B cell (primary cell): ENCODE measurements at regions of chr5 and their contacts with region 1.

Region 1: DNA sequence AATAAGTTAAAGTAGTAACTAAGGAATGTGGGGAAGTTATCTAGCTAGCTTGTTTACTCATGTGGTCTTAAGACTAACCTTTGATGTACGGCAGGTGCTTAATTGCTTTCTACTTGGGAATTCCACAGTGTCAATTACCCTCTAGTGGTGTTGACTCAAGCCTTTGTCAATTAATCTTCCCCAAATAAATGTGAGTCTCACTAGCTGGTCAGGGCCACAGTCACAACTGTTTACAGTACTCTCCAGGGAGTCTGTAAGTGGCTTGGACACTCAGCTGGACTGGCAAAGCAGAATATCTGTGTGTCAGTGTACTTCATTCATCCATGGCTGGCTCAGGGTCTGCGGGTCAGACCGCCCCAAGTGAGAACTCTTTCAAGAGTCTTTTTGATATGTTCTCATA is 30.8 kb downstream of the SMIM3 start:
- DNase-seq: no peak
- ATAC-seq: no peak
- H3K4me3 ChIP-seq: no peak overlapping the region
- H3K4me3 Mint-ChIP-seq: no peak overlapping the region
- H3K27ac ChIP-seq: no peak overlapping the region
- H3K27ac Mint-ChIP-seq: no peak overlapping the region
- H3K4me1 ChIP-seq: no peaks in the 10 kb centered on the region
- H3K4me1 Mint-ChIP-seq: no peaks in the 10 kb centered on the region
- H3K27me3 ChIP-seq: peaks cover 0 to 2% (median under 1%) of the 10 kb centered on the region in 4 experiments
- H3K27me3 Mint-ChIP-seq: peaks cover 21% of the 10 kb centered on the region
- CTCF ChIP-seq: no peak

Region 2: GRCh38 chr5:151239237-151239861 is 430.0 kb after region 1 on chr5:
- CTCF ChIA-PET with region 1: no interaction called
- POLR2A ChIA-PET with region 1: no interaction called
- intact Hi-C with region 1: no loop called
- DNase-seq: peak; percentile 66
- ATAC-seq: peak; percentile 64
- H3K4me3 ChIP-seq: peak overlapping the region in 2 of 5 experiments; percentile 7 to 20
- H3K4me3 Mint-ChIP-seq: peak overlapping the region; percentile 84
- H3K27ac ChIP-seq: no peak overlapping the region
- H3K27ac Mint-ChIP-seq: peak overlapping the region; percentile 82
- H3K4me1 ChIP-seq: peaks cover 81 to 82% of the 10 kb centered on the region in 2 donors
- H3K4me1 Mint-ChIP-seq: peaks cover 95% of the 10 kb centered on the region
- H3K27me3 ChIP-seq: no peaks in the 10 kb centered on the region
- H3K27me3 Mint-ChIP-seq: no peaks in the 10 kb centered on the region
- CTCF ChIP-seq: peak; percentile 99

Region 3: GRCh38 chr5:151281001-151281639 is 471.8 kb after region 1 on chr5:
- CTCF ChIA-PET with region 1: no interaction called
- POLR2A ChIA-PET with region 1: interaction called, 11 read pairs
- intact Hi-C with region 1: no loop called
- DNase-seq: no peak
- ATAC-seq: no peak
- H3K4me3 ChIP-seq: no peak overlapping the region
- H3K4me3 Mint-ChIP-seq: no peak overlapping the region
- H3K27ac ChIP-seq: no peak overlapping the region
- H3K27ac Mint-ChIP-seq: no peak overlapping the region
- H3K4me1 ChIP-seq: no peaks in the 10 kb centered on the region
- H3K4me1 Mint-ChIP-seq: no peaks in the 10 kb centered on the region
- H3K27me3 ChIP-seq: no peaks in the 10 kb centered on the region
- H3K27me3 Mint-ChIP-seq: no peaks in the 10 kb centered on the region
- CTCF ChIP-seq: no peak